Caco-2 (cell line): ENCODE measurements at regions of chr7 and their contacts with region 1.

Region 1: DNA sequence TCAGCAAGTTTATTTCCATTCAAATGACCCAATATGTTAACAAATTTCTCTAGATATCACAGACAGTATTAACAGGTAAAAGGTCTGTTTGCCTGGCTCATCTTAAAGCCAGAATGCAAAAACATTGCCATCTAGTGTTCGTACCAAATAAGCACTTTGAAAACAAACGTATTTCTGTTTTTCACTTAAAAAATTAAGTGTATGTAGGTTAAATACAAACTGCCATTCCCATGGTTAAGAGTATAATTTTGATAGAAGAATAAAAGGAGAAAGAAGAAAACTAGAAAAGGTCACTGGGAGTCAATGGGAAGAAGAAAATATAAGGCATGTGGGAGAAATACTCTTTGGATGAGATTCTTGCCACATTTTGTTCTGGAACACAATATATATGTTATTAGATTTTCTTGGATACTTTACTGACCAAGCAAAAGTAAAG is 51.0 kb downstream of the ORC5 start:
- DNase-seq: peak in 1 of 2 experiments; percentile 18
- H3K4me3 ChIP-seq: no peak overlapping the region
- H3K4me3 Mint-ChIP-seq: no peak overlapping the region
- H3K27ac Mint-ChIP-seq: peak overlapping the region; percentile 63
- H3K4me1 ChIP-seq: peaks cover 9% of the 10 kb centered on the region
- H3K4me1 Mint-ChIP-seq: peaks cover 7% of the 10 kb centered on the region
- H3K27me3 ChIP-seq: no peaks in the 10 kb centered on the region
- H3K27me3 Mint-ChIP-seq: no peaks in the 10 kb centered on the region
- CTCF ChIP-seq: peak; percentile 56 to 65

Region 2: DNA sequence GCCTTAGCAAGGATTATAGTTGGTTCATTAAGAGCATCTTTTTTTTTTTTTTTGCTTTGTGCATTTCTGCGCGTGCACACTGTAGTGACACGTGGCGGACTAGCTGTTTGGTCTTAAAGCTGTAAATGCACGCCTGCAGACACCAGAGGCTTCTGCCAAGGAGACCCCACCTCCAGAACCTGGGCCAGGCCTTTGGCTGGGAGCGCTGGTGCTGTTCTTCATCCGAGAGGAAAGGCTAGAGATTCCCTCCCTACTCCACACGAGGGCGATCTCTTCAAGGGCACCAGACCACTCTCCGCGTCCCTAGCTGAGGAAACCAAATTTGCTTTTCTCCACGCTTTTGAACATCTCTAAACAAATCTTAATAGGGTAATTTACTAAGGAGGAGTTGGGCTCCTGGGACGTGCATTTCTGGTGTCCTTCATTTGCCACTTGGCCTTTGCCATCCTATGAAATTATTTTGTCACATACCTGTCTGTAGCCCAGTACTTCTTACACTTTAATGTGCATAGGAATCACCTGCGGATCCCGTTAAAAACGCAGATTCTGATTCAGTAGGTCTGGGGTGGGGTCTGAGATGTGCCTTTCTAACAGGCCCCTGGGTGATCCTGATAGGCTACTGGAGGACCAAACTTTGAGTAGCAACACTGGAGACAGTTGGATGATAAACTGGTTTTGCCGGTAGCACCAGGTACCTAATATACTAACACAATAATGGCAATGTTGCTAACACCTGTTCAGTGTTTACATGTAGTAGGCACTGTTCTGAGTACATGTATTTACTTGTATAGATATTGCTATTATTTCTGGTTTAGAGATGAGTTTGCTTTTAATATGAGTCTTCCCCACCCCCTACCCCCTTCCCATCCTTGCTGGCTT is 709.5 kb before region 1 on chr7:
- CTCF ChIA-PET with region 1: no interaction called
- POLR2A ChIA-PET with region 1: no interaction called
- intact Hi-C with region 1: loop called (anchors 2 kb)
- DNase-seq: peak; percentile 73 to 78
- H3K4me3 ChIP-seq: no peak overlapping the region
- H3K4me3 Mint-ChIP-seq: peak overlapping the region; percentile 10
- H3K27ac Mint-ChIP-seq: no peak overlapping the region
- H3K4me1 ChIP-seq: peaks cover 8% of the 10 kb centered on the region
- H3K4me1 Mint-ChIP-seq: no peaks in the 10 kb centered on the region
- H3K27me3 ChIP-seq: no peaks in the 10 kb centered on the region
- H3K27me3 Mint-ChIP-seq: peaks cover 10% of the 10 kb centered on the region
- CTCF ChIP-seq: peak; percentile 75 to 94

Region 3: GRCh38 chr7:103573479-103574058 is 583.3 kb before region 1 on chr7:
- CTCF ChIA-PET with region 1: no interaction called
- POLR2A ChIA-PET with region 1: no interaction called
- intact Hi-C with region 1: loop called (anchors 1 kb)
- DNase-seq: peak in 1 of 2 experiments; percentile 19
- H3K4me3 ChIP-seq: no peak overlapping the region
- H3K4me3 Mint-ChIP-seq: no peak overlapping the region
- H3K27ac Mint-ChIP-seq: no peak overlapping the region
- H3K4me1 ChIP-seq: peaks cover 36% of the 10 kb centered on the region
- H3K4me1 Mint-ChIP-seq: peaks cover 36% of the 10 kb centered on the region
- H3K27me3 ChIP-seq: no peaks in the 10 kb centered on the region
- H3K27me3 Mint-ChIP-seq: no peaks in the 10 kb centered on the region
- CTCF ChIP-seq: peak; percentile 40 to 54

Region 4: GRCh38 chr7:103752997-103753396 is 403.9 kb before region 1 on chr7:
- CTCF ChIA-PET with region 1: no interaction called
- POLR2A ChIA-PET with region 1: no interaction called
- intact Hi-C with region 1: loop called (anchors 10 kb)
- DNase-seq: peak in 1 of 2 experiments; percentile 32
- H3K4me3 ChIP-seq: no peak overlapping the region
- H3K4me3 Mint-ChIP-seq: no peak overlapping the region
- H3K27ac Mint-ChIP-seq: no peak overlapping the region
- H3K4me1 ChIP-seq: no peaks in the 10 kb centered on the region
- H3K4me1 Mint-ChIP-seq: no peaks in the 10 kb centered on the region
- H3K27me3 ChIP-seq: no peaks in the 10 kb centered on the region
- H3K27me3 Mint-ChIP-seq: no peaks in the 10 kb centered on the region
- CTCF ChIP-seq: peak; percentile 28 to 45

Region 5: GRCh38 chr7:104074529-104074928 is 82.3 kb before region 1 on chr7:
- CTCF ChIA-PET with region 1: no interaction called
- POLR2A ChIA-PET with region 1: no interaction called
- intact Hi-C with region 1: no loop called
- DNase-seq: no peak
- H3K4me3 ChIP-seq: no peak overlapping the region
- H3K4me3 Mint-ChIP-seq: no peak overlapping the region
- H3K27ac Mint-ChIP-seq: no peak overlapping the region
- H3K4me1 ChIP-seq: no peaks in the 10 kb centered on the region
- H3K4me1 Mint-ChIP-seq: no peaks in the 10 kb centered on the region
- H3K27me3 ChIP-seq: no peaks in the 10 kb centered on the region
- H3K27me3 Mint-ChIP-seq: no peaks in the 10 kb centered on the region
- CTCF ChIP-seq: no peak

Region 6: DNA sequence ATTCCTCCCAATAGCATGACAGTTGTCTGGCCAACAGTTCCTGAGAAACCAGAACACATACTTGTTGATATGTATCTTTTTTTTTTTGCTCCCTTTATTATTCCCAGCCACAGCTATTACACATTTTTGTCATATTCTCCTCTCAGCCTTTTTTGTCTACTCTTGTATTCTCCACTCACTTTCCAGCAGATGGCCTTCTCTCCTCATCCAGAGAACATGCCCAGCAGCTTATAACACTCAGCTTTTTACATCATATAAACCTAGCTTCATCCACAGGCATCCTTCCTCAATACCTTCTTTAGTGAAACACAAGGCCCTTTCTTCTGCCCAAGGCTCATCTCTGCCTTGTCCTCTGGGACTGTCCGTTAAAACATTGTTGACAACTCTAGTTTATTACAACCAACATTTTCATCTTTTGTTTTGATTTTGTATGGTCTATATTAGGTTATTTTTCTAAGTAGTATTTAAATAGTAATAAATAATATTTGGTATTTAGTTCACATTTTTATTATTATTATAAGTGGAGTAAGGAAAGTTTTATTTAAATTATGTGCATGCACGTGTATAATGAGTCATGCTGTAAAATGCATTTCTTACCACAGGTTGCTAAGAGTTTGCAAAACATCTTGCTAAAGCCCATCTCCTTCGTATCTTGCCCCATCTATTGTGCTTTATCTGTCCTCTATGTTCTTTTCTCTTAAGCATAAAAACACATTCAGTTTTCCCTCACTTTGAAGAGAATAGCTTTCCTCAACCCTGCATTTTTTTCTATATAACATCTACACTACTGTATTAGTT is 50.6 kb before region 1 on chr7:
- CTCF ChIA-PET with region 1: interaction called, 8 read pairs
- POLR2A ChIA-PET with region 1: no interaction called
- intact Hi-C with region 1: loop called (anchors 1 kb)
- DNase-seq: peak in 1 of 2 experiments; percentile 7
- H3K4me3 ChIP-seq: no peak overlapping the region
- H3K4me3 Mint-ChIP-seq: no peak overlapping the region
- H3K27ac Mint-ChIP-seq: no peak overlapping the region
- H3K4me1 ChIP-seq: no peaks in the 10 kb centered on the region
- H3K4me1 Mint-ChIP-seq: peaks cover 5% of the 10 kb centered on the region
- H3K27me3 ChIP-seq: no peaks in the 10 kb centered on the region
- H3K27me3 Mint-ChIP-seq: no peaks in the 10 kb centered on the region
- CTCF ChIP-seq: peak in 1 of 2 experiments; percentile 36